Dendritic cell treated with granulocyte-macrophage colony-stimulating factor and Interleukin-4, amounts not matched to agents 40 ng/mL and 50 ng/mL, for 4 days (primary cell): ENCODE measurements at regions of chr6 and their contacts with region 1.

Region 1: GRCh38 chr6:32290886-32291450 is 67.1 kb upstream of the NOTCH4 start:
- H3K4me3 Mint-ChIP-seq: no peak overlapping the region
- H3K27ac Mint-ChIP-seq: no peak overlapping the region
- H3K4me1 Mint-ChIP-seq: peaks cover 29% of the 10 kb centered on the region
- H3K27me3 Mint-ChIP-seq: peaks cover 17% of the 10 kb centered on the region

Region 2: DNA sequence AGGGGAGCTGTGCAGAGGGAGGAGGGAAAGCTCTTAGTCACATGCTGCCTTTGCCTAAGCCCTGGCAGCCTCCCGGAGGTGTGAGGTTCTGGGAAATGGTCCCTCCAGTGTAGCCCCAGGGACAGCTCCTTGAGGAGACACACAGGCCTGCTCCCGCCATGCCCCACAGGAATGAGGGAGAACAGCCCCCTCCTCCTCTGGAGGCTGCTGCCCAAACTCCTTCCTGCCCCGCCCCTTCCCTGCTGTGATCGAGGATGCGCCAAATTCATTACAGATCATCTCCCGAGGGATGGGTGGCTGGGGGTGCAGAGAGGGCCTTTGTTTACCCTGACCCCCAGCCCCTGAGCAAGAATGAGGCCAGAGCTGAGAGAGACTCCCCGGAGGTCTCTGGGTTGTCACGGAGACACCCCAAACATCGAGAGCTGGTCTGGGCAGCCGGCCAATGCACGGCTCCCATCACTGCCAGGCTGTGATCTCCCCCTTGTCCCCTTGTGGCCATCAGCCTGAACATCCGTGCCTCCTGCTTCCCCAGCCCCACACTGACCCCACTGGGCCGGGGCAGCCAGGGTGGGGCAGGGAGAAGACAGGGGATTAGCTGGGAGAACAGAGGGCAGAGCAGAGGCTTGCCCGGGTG is 244.4 kb before region 1 on chr6:
- intact Hi-C with region 1: no loop called
- H3K4me3 Mint-ChIP-seq: no peak overlapping the region
- H3K27ac Mint-ChIP-seq: no peak overlapping the region
- H3K4me1 Mint-ChIP-seq: peaks cover 8% of the 10 kb centered on the region
- H3K27me3 Mint-ChIP-seq: peaks cover 19% of the 10 kb centered on the region

Region 3: DNA sequence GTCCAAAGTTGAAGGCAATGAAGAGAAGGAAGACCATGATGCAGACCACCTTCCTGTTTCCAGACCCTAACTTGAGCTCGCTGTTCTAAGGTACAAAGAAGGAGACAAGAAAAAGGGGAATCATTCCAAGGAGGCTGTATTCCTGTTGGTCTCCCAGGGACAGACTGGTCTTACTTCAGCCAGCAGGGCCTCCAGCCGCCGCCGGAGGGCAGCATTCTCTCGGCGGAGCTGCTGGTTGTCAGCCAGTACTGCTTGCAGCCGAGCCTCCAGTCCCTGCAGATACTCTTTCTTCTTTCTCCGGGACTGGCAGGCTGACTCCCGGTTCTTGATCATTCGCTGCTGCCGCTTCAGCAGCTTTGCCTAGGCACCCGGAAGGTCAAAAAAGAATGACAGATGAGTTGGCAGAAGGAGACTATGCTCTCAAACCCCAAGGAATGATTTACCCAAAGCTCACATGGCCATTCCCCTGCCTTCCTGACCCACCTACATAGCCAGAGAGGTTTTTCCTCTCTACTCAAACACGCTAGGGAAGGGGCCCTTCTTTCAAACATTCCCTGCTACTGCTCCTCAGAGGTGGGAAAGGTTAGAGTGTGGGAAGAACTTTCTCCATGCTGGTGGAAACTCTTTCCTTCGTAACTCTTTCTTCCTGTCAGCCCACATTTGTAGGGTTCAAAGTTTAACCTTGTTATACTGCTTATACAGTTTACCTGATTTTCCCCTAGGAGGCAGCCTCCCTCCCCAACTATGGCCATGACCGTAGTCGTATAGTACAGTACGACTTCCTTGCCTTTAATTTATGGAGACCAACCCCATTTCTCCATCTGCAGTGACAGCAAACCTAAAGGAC is 172.0 kb before region 1 on chr6:
- intact Hi-C with region 1: no loop called
- H3K4me3 Mint-ChIP-seq: no peak overlapping the region
- H3K27ac Mint-ChIP-seq: peak overlapping the region; percentile 14
- H3K4me1 Mint-ChIP-seq: peaks cover 76% of the 10 kb centered on the region
- H3K27me3 Mint-ChIP-seq: no peaks in the 10 kb centered on the region

Region 4: DNA sequence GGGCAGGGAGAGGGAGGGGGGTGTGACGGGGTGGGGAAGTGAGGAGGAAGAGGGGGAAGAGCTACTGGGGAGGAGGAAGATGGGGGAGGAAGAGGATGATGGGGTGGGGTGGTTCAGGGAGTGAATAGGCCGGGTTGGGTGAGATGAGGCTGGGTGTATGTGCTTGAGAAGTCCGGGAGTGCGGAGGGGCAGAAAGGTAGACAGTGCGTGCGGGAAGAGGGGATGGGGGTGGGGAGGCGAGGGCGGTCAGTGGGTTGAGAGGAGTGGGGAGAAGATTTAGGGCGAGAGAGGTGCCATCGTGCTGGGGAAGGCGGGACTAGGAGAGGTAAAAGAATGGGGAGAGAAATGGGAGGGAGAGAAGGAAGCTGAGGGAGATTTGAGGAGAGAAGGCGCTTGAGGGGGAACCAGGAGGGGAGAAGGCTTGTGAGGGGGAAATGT is 36.2 kb before region 1 on chr6:
- intact Hi-C with region 1: loop called (anchors 5 kb)
- H3K4me3 Mint-ChIP-seq: peak overlapping the region; percentile 58
- H3K27ac Mint-ChIP-seq: peak overlapping the region; percentile 71
- H3K4me1 Mint-ChIP-seq: peaks cover 24% of the 10 kb centered on the region
- H3K27me3 Mint-ChIP-seq: peaks cover 34% of the 10 kb centered on the region

Region 5: GRCh38 chr6:32718879-32719278 is 427.9 kb after region 1 on chr6:
- intact Hi-C with region 1: loop called (anchors 5 kb)
- H3K4me3 Mint-ChIP-seq: no peak overlapping the region
- H3K27ac Mint-ChIP-seq: no peak overlapping the region
- H3K4me1 Mint-ChIP-seq: peaks cover 8% of the 10 kb centered on the region
- H3K27me3 Mint-ChIP-seq: peaks cover 8% of the 10 kb centered on the region